ENCODE measurements at regions of chr4 and their contacts with region 1.

Region 1: DNA sequence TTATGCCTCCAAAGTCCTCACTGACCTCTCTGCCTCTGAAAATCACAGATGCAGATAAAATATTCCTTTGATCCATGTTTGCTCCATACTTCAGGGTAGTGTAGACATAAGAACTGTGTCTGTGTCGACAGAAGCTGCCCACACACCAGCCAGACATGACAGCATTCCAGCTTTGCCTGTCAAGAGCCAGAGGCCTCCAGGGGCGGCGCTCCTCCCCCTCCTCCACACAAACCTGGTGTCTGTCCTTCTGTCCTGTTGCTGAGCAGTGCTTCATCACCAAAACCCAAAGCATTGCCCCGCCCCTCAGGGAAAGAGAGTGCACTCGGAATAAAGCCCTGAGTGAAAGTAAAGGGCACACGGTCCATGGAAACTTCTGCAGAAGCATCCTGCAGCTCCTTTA is 379.4 kb downstream of the FBXW7 start:
- DNase-seq: peak; percentile 76

Region 2: GRCh38 chr4:152045807-152046571 is 110.5 kb before region 1 on chr4:
- intact Hi-C with region 1: loop called (anchors 5 kb)
- DNase-seq: no peak

Region 3: GRCh38 chr4:152112887-152113286 is 43.6 kb before region 1 on chr4:
- intact Hi-C with region 1: loop called (anchors 5 kb)
- DNase-seq: no peak

Region 4: DNA sequence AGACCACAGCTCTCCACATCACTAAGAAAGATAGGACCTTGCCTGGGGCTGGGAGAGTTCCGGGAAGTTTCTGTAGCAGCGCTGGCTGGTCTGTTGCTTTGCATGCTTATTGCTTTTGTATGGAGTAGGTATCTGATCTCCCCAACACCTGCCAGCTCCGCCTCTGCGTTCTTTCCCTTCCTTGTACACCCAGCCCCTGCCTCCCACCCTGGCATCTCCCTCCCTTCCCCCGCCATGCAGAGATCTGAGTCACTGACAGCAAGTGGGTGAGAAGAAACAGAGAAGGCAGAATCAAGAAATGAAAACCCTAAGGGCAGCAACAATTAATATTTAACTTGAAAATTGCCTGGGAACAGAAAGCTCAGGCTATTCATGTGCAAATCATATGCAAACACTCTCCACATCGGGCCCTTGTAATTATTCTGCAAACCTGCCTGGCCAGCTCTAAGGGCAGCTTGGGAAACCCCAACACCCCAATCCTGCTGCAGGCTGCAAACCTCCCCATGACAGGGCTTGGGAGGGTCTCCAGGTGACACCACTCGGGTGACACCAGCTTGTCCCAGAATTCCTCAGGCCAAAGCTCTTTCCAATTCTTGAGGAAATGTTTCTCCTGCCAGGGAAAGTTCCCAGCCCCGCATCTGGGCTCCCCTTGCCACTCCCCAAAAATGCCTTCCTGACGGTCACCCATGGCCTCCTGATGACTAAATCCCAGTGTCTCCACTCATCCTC is 122.2 kb after region 1 on chr4:
- intact Hi-C with region 1: no loop called
- DNase-seq: no peak